ENCODE measurements at regions of chr1 and their contacts with region 1.

Region 1: GRCh38 chr1:32933742-32934322 is 30.8 kb downstream of the RNF19B start:
- DNase-seq: no peak
- H3K4me3 ChIP-seq: no peak overlapping the region
- H3K27ac ChIP-seq: peak overlapping the region; percentile 36 to 41
- H3K4me1 ChIP-seq: no peaks in the 10 kb centered on the region
- H3K27me3 ChIP-seq: no peaks in the 10 kb centered on the region
- CTCF ChIP-seq: no peak

Region 2: GRCh38 chr1:33007190-33008050 is 73.6 kb after region 1 on chr1:
- intact Hi-C with region 1: loop called (anchors 1 kb)
- DNase-seq: peak in 1 of 2 donors; percentile 77
- H3K4me3 ChIP-seq: no peak overlapping the region
- H3K27ac ChIP-seq: no peak overlapping the region
- H3K4me1 ChIP-seq: peaks cover under 1 to 12% of the 10 kb centered on the region in 2 donors
- H3K27me3 ChIP-seq: no peaks in the 10 kb centered on the region
- CTCF ChIP-seq: peak; percentile 21 to 53 (median 46)

Region 3: GRCh38 chr1:33055210-33056008 is 121.6 kb after region 1 on chr1:
- intact Hi-C with region 1: loop called (anchors 5 kb)
- DNase-seq: peak in 1 of 2 donors; percentile 76
- H3K4me3 ChIP-seq: no peak overlapping the region
- H3K27ac ChIP-seq: no peak overlapping the region
- H3K4me1 ChIP-seq: peaks cover 0 to 1% of the 10 kb centered on the region in 2 donors
- H3K27me3 ChIP-seq: no peaks in the 10 kb centered on the region
- CTCF ChIP-seq: peak; percentile 58 to 68 (median 64)

Region 4: GRCh38 chr1:33080885-33081553 is 147.2 kb after region 1 on chr1 and contains the start of gene AZIN2:
- intact Hi-C with region 1: loop called (anchors 5 kb)
- DNase-seq: peak; percentile 84 to 98
- H3K4me3 ChIP-seq: peak within 1 kb of the TSS; percentile 70 to 91
- H3K27ac ChIP-seq: peak within 1 kb of the TSS in 1 of 2 donors; percentile 11
- H3K4me1 ChIP-seq: peaks cover 0 to 14% of the 10 kb centered on the region in 2 donors
- H3K27me3 ChIP-seq: no peaks in the 10 kb centered on the region
- CTCF ChIP-seq: no peak
- total RNA-seq, gene AZIN2: 3.5 TPM

Region 5: DNA sequence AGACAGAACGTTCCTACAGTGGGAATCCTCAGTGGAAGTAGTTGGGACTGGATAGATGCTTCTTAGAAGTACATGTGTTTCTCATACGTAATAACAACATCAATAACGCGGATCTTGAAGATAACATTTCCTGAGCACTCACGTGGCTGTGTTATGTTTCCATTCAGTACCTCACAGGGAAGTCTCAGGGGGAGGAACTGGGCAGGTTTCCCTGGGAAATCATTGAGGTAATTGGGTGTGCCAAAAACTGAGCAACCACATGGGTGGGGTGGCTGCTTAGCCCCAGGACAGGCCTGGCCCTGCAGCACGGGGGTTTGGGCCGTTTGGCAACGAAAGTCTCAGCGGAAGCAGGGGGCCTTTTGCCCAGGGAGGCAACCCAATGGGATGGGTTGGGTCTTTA is 672.4 kb after region 1 on chr1:
- intact Hi-C with region 1: no loop called
- DNase-seq: no peak
- H3K4me3 ChIP-seq: no peak overlapping the region
- H3K27ac ChIP-seq: no peak overlapping the region
- H3K4me1 ChIP-seq: no peaks in the 10 kb centered on the region
- H3K27me3 ChIP-seq: no peaks in the 10 kb centered on the region
- CTCF ChIP-seq: no peak

Measured in ascending aorta (tissue), 2 donors.